Sigmoid colon (tissue), 7 donors: ENCODE measurements at regions of chr10 and their contacts with region 1.

Region 1: DNA sequence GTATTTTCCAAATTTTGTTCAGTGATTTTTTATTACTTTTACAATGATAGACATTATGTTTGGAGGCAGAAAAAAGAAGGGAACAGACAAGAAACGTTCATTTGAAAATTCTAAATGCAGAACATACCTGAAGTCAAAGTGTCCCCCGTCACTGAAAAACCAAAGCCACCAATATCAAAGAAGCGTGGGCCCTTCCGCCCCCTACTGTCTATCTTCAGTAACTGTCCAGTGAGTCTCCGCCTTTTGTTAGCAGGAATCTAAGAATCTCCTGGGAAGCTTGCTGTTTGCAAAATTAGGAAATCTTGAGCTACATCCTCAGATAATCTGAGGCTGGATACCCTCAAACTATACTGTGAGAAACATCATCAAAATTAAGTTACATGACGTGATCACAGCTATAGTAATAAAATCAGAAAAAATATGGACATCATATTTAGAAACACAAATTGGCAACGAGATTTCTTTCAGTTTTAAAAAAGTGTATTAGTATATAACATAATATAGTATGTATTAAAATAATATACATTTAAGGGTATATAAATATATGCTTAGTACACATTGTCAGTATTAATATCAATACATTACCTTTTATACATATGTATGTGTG is 169.3 kb upstream of the AKR1E2 start:
- DNase-seq: peak; percentile 82
- H3K4me3 ChIP-seq: no peak overlapping the region
- H3K27ac ChIP-seq: no peak overlapping the region
- H3K4me1 ChIP-seq: peaks cover 0 to 4% (median 2%) of the 10 kb centered on the region in 4 donors
- H3K27me3 ChIP-seq: no peaks in the 10 kb centered on the region
- CTCF ChIP-seq: peak; percentile 79 to 94 (median 88)
- EP300 ChIP-seq: no peak
- POLR2A ChIP-seq: no peak

Region 2: GRCh38 chr10:3197348-3198003 is 1459.2 kb before region 1 on chr10:
- intact Hi-C with region 1: loop called (anchors 5 kb)
- DNase-seq: peak; percentile 90
- H3K4me3 ChIP-seq: peak overlapping the region in 1 of 4 donors; percentile 15
- H3K27ac ChIP-seq: peak overlapping the region in 3 of 4 donors; percentile 19 to 70 (median 51)
- H3K4me1 ChIP-seq: peaks cover 0 to 25% (median 14%) of the 10 kb centered on the region in 4 donors
- H3K27me3 ChIP-seq: no peaks in the 10 kb centered on the region
- CTCF ChIP-seq: peak; percentile 61 to 92 (median 86)
- EP300 ChIP-seq: no peak
- POLR2A ChIP-seq: no peak

Region 3: GRCh38 chr10:3239066-3239919 is 1417.4 kb before region 1 on chr10:
- intact Hi-C with region 1: loop called (anchors 5 kb)
- DNase-seq: peak; percentile 86
- H3K4me3 ChIP-seq: no peak overlapping the region
- H3K27ac ChIP-seq: peak overlapping the region in 3 of 4 donors; percentile 2 to 52 (median 38)
- H3K4me1 ChIP-seq: peaks cover 0 to 17% (median 3%) of the 10 kb centered on the region in 4 donors
- H3K27me3 ChIP-seq: no peaks in the 10 kb centered on the region
- CTCF ChIP-seq: peak; percentile 81 to 93 (median 90)
- EP300 ChIP-seq: no peak
- POLR2A ChIP-seq: no peak

Region 4: GRCh38 chr10:4344511-4344994 is 312.1 kb before region 1 on chr10:
- intact Hi-C with region 1: loop called (anchors 10 kb)
- DNase-seq: peak; percentile 90
- H3K4me3 ChIP-seq: no peak overlapping the region
- H3K27ac ChIP-seq: peak overlapping the region; percentile 45 to 85 (median 79)
- H3K4me1 ChIP-seq: peaks cover 0 to 31% (median 28%) of the 10 kb centered on the region in 4 donors
- H3K27me3 ChIP-seq: no peaks in the 10 kb centered on the region
- CTCF ChIP-seq: peak in 1 of 4 experiments; percentile 23
- EP300 ChIP-seq: peak in 3 of 4 donors; percentile 7 to 87 (median 54)
- POLR2A ChIP-seq: no peak

Region 5: DNA sequence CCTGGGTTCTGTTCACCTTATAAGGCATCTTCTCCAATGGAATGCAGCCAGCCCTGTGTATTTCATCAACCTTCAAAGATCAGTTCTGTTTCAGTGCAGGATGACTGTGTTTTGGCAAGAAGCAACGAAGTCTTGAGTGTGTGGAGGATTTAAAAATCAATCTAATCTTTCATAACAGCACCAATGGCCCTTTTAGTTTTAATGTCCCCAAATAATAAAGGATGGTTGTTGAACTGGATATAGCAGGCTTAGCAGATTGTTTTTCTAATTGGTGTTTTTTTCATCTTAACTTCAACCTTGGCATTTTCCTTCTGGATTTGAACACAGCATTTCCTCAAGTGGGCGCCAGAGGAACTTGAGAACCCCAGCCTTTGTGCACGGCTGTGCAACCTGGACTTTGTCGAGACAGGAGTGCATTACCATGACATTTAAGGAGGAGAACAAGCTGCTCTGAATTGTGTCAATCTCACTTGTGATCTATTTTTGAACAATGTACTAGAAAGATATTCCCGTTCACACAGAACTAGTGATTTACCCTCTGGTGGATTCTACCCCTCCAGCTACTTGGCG is 143.9 kb before region 1 on chr10:
- intact Hi-C with region 1: loop called (anchors 5 kb)
- DNase-seq: peak; percentile 73
- H3K4me3 ChIP-seq: no peak overlapping the region
- H3K27ac ChIP-seq: peak overlapping the region in 2 of 4 donors; percentile 37 to 58
- H3K4me1 ChIP-seq: peaks cover 0 to 17% (median 7%) of the 10 kb centered on the region in 4 donors
- H3K27me3 ChIP-seq: no peaks in the 10 kb centered on the region
- CTCF ChIP-seq: peak in 3 of 4 experiments; percentile 46 to 55 (median 54)
- EP300 ChIP-seq: no peak
- POLR2A ChIP-seq: no peak

Region 6: GRCh38 chr10:4767033-4767814 is 110.5 kb after region 1 on chr10:
- intact Hi-C with region 1: loop called (anchors 10 kb)
- DNase-seq: no peak
- H3K4me3 ChIP-seq: no peak overlapping the region
- H3K27ac ChIP-seq: peak overlapping the region in 2 of 4 donors; percentile 1 to 58
- H3K4me1 ChIP-seq: peaks cover 0 to 40% (median 28%) of the 10 kb centered on the region in 4 donors
- H3K27me3 ChIP-seq: no peaks in the 10 kb centered on the region
- CTCF ChIP-seq: peak; percentile 47 to 79 (median 64)
- EP300 ChIP-seq: no peak
- POLR2A ChIP-seq: no peak